ENCODE measurements at regions of chr2 and their contacts with region 1.

Region 1: GRCh38 chr2:24827321-24828237 is 34.4 kb downstream of the CENPO start:
- DNase-seq: peak; percentile 83 to 94
- H3K4me3 ChIP-seq: no peak overlapping the region
- CTCF ChIP-seq: no peak
- POLR2A ChIP-seq: no peak

Region 2: DNA sequence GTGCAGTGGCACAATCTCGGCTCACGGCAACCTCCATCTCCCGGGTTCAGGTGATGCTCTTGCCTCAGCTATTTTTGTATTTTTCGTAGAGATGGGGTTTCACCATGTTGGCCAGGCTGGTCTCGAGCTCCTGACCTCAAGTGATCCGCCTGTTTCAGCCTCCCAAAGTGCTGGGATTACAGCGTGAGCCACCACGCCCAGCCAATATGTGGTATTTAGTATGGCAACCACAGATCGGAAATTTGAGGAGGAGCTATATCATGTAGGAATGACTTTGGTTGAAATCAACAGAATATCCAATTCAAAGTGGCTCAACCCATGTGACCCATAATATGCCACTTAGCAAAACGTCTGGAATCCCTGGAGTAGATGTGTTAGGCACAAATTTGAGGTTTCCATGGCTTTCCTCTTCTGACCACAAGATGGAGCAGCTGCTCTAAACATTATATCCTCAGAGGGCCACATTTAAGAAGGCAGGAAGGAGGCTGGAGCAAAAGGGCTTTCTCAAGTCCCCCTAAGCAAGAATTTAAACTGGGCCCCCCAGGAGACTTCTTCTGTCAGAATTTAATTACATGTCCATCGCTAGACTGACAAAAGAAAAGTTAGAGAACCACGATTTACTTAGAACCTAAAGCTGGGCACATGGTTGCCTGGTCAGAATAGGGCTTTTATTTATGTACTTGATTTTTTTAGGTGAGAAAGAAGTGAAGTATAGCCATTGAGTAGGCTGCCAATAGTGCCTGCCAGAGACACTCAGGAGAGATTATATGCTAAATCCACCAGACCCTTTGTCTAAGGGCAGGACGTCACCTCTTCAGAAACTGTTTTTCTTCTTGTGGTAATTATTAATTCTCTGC is 417.7 kb before region 1 on chr2:
- intact Hi-C with region 1: loop called (anchors 5 kb)
- DNase-seq: peak; percentile 41 to 67
- H3K4me3 ChIP-seq: no peak overlapping the region
- CTCF ChIP-seq: peak in 1 of 3 donors; percentile 61
- POLR2A ChIP-seq: no peak

Region 3: DNA sequence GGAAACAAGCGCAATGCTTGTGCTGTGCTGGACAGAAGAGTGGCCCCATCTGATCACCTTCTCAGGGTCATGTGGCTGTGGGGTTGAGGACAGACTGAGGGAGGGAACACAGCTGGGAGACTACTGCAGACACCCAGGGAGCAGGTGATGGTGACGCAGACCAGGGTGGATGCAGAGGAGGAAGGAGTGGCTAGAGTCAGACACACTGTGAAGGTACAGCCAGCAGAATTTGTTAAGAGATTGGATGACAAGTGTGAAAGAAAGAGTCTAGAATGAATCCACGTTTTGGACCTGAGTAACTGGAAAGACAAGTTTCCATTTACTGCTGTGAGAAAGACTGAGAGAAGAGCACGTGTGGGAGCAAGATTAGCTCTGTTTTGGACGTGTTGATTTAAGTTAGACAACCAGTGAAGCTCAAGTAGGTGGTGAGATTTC is 356.7 kb after region 1 on chr2:
- intact Hi-C with region 1: no loop called
- DNase-seq: peak in 1 of 2 donors; percentile 35
- H3K4me3 ChIP-seq: no peak overlapping the region
- CTCF ChIP-seq: no peak
- POLR2A ChIP-seq: no peak

Measured in lower leg skin (tissue), 4 donors.